HEK293 (cell line): ENCODE measurements at regions of chr4 and their contacts with region 1.

Region 1: GRCh38 chr4:176077561-176077960 is 11.9 kb downstream of the WDR17 start:
- H3K4me3 ChIP-seq: no peak overlapping the region
- H3K27ac ChIP-seq: no peak overlapping the region
- H3K4me1 ChIP-seq: no peaks in the 10 kb centered on the region
- CTCF ChIP-seq: no peak

Region 2: GRCh38 chr4:176099314-176099713 is 21.8 kb after region 1 on chr4:
- CTCF ChIA-PET with region 1: interaction called, 10 read pairs
- POLR2A ChIA-PET with region 1: no interaction called
- H3K4me3 ChIP-seq: no peak overlapping the region
- H3K27ac ChIP-seq: no peak overlapping the region
- H3K4me1 ChIP-seq: no peaks in the 10 kb centered on the region
- CTCF ChIP-seq: no peak

Region 3: DNA sequence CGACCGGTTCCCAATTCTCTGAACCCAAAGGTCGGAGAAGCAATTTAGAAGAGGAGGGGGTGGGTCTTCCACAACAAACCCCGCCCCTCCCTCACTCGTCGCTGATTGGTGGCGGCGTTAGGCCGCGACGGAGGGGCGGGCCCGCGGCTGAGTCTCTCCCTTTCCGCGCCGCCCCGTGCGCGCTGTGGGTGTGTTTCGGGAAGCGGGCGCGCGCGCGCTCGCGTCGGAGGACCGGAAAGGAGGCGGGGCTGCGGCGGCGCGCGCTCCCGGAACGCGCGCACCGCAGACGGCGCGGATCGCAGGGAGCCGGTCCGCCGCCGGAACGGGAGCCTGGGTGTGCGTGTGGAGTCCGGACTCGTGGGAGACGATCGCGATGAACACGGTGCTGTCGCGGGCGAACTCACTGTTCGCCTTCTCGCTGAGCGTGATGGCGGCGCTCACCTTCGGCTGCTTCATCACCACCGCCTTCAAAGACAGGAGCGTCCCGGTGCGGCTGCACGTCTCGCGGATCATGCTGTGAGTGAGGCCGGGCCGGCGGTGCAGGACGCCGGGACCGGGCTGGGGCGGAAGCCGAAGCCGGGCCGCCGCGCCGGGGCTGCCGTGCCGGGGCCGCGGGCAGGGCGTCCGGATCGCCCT is 242.3 kb after region 1 on chr4 and contains the start of gene SPCS3:
- CTCF ChIA-PET with region 1: no interaction called
- POLR2A ChIA-PET with region 1: interaction called, 12 read pairs
- H3K4me3 ChIP-seq: peak within 1 kb of the TSS; percentile 98
- H3K27ac ChIP-seq: peak within 1 kb of the TSS; percentile 93
- H3K4me1 ChIP-seq: 0 out of 2 replicates have a peak, but pooled peaks cover 3% of the 10 kb centered on the region
- CTCF ChIP-seq: no peak